ENCODE measurements at regions of chr5 and their contacts with region 1.

Region 1: DNA sequence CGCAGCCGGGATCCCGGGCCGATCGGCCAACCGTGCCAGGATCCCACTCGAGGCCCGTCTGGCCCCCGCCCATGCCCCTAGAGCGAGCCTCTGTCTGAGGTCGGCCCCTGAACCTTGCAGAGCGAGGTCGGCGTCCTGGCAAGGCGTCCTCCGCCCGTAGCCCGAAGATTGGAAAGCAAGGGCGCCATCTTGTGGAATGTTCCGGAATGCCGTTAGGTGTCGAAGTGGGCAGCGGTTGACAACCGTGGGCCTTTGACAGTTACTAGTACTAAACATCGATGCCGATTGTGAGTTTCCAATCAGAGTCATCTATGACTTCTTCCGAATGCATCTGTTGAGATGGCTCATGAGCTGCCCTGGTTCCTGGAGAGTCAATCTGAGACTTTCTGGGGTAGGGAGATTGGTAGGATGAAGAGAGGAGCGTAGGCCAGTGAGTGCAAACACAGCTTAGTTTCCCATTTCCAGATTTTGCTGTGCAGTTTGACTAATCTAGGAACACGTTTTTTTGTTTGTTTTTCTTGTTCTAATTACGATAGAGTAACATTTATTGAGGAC is 923 bp upstream of the PLK2 start:
- DNase-seq: peak; percentile 92 to 98 (median 95)
- ATAC-seq: peak; percentile 85
- H3K4me3 ChIP-seq: peak overlapping the region; percentile 74
- H3K4me1 ChIP-seq: peaks cover 9% of the 10 kb centered on the region
- CTCF ChIP-seq: peak; percentile 67

Region 2: GRCh38 chr5:57298295-57298984 is 1162.4 kb before region 1 on chr5:
- intact Hi-C with region 1: loop called (anchors 2 kb)
- DNase-seq: peak in 2 of 3 donors; percentile 71 to 98
- ATAC-seq: peak; percentile 93
- H3K4me3 ChIP-seq: no peak overlapping the region
- H3K4me1 ChIP-seq: peaks cover 7% of the 10 kb centered on the region
- CTCF ChIP-seq: peak; percentile 60

Region 3: GRCh38 chr5:57650360-57651069 is 810.3 kb before region 1 on chr5:
- intact Hi-C with region 1: loop called in 1 of 2 experiments (anchors 2 kb)
- DNase-seq: peak in 1 of 3 donors; percentile 54
- ATAC-seq: peak; percentile 91
- H3K4me3 ChIP-seq: no peak overlapping the region
- H3K4me1 ChIP-seq: no peaks in the 10 kb centered on the region
- CTCF ChIP-seq: peak; percentile 50

Region 4: GRCh38 chr5:57779383-57780223 is 681.2 kb before region 1 on chr5:
- intact Hi-C with region 1: loop called (anchors 5 to 10 kb)
- DNase-seq: peak in 1 of 3 donors; percentile 57
- ATAC-seq: peak; percentile 69
- H3K4me3 ChIP-seq: no peak overlapping the region
- H3K4me1 ChIP-seq: no peaks in the 10 kb centered on the region
- CTCF ChIP-seq: no peak

Region 5: GRCh38 chr5:57791875-57792274 is 668.9 kb before region 1 on chr5:
- intact Hi-C with region 1: loop called (anchors 5 to 10 kb)
- DNase-seq: no peak
- ATAC-seq: no peak
- H3K4me3 ChIP-seq: no peak overlapping the region
- H3K4me1 ChIP-seq: no peaks in the 10 kb centered on the region
- CTCF ChIP-seq: no peak

Region 6: GRCh38 chr5:57887851-57888621 is 572.8 kb before region 1 on chr5:
- intact Hi-C with region 1: loop called in 1 of 2 experiments (anchors 10 kb)
- DNase-seq: peak in 2 of 3 donors; percentile 26 to 60
- ATAC-seq: peak; percentile 91
- H3K4me3 ChIP-seq: no peak overlapping the region
- H3K4me1 ChIP-seq: no peaks in the 10 kb centered on the region
- CTCF ChIP-seq: no peak

Region 7: GRCh38 chr5:58640011-58640410 is 179.2 kb after region 1 on chr5:
- intact Hi-C with region 1: no loop called
- DNase-seq: no peak
- ATAC-seq: no peak
- H3K4me3 ChIP-seq: no peak overlapping the region
- H3K4me1 ChIP-seq: no peaks in the 10 kb centered on the region
- CTCF ChIP-seq: no peak